Left cardiac atrium (tissue), 4 donors: ENCODE measurements at regions of chr15 and their contacts with region 1.

Region 1: GRCh38 chr15:40266828-40267304 is 16.0 kb downstream of the ANKRD63 start:
- DNase-seq: no peak
- ATAC-seq: peak; percentile 60 to 98

Region 2: GRCh38 chr15:40115670-40116093 is 151.2 kb before region 1 on chr15:
- intact Hi-C with region 1: loop called in 1 of 2 experiments (anchors 10 kb)
- DNase-seq: no peak
- ATAC-seq: peak; percentile 34 to 54